ENCODE measurements at regions of chr2 and their contacts with region 1.

Region 1: DNA sequence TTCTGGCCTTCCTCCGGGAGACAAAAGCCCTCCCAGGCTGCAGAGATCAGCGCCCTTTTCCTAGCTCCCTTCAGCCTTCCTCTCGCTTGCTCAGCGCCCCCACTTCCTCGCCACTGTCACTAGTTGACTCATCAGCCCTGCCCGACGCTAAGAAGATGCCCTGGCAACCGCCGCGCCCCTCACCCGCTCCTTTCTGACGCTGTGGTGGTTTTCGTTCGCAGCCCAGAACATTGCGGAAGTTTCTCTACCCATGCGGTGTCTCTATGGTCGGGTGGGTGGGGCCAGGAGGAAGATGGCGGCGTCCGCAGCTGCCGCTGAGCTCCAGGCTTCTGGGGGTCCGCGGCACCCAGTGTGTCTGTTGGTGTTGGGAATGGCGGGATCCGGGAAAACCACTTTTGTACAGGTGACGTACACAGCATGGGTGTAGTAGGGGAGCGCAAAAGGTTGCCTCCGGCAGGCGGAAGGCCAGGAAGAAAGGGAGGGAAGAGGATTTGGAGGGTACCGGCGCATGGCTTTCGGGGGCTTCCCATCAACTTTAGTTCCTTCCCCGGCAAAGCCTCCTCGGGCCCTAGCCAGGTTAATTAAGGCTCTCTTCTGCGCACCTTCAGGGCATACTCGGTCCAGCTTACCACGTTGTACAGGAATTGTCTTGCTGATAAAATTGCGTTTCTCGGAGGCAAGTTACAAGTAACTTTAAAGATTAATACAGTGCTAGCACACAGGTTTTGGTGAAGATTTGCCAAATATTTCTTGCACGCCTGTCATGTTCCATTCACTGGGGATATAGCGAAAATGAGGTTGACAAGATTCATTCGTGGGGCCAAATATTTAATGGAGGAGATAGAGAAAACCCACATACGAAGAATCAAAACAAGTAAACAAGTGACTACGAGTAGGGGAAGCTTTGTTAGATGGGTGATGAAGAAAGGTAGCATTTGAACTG is at the starts of genes CCDC121 and GPN1:
- DNase-seq: peak; percentile 85
- ATAC-seq: peak; percentile 99
- H3K4me3 Mint-ChIP-seq: no peak within 1 kb of the TSS
- H3K27ac Mint-ChIP-seq: peak within 1 kb of the TSS; percentile 69
- H3K4me1 Mint-ChIP-seq: peaks cover 12% of the 10 kb centered on the region
- H3K27me3 Mint-ChIP-seq: no peaks in the 10 kb centered on the region
- CTCF ChIP-seq: no peak
- total RNA-seq, gene CCDC121: 0.69 and 0.71 TPM in 2 replicates
- total RNA-seq, gene GPN1: 36.9 and 39.3 TPM in 2 replicates

Region 2: GRCh38 chr2:27071277-27071989 is 557.6 kb before region 1 on chr2 and contains the start of gene OST4:
- CTCF ChIA-PET with region 1: no interaction called
- POLR2A ChIA-PET with region 1: interaction called, 3 read pairs
- intact Hi-C with region 1: loop called (anchors 2 kb)
- DNase-seq: peak; percentile 92
- ATAC-seq: peak; percentile 96
- H3K4me3 Mint-ChIP-seq: peak within 1 kb of the TSS; percentile 97
- H3K27ac Mint-ChIP-seq: peak within 1 kb of the TSS; percentile 90
- H3K4me1 Mint-ChIP-seq: peaks cover 67% of the 10 kb centered on the region
- H3K27me3 Mint-ChIP-seq: no peaks in the 10 kb centered on the region
- CTCF ChIP-seq: no peak
- total RNA-seq, gene OST4: 243 and 265 TPM in 2 replicates

Region 3: GRCh38 chr2:27356382-27357181 is 272.5 kb before region 1 on chr2 and contains the start of gene GTF3C2:
- CTCF ChIA-PET with region 1: no interaction called
- POLR2A ChIA-PET with region 1: interaction called, 3 read pairs
- intact Hi-C with region 1: loop called (anchors 1 kb)
- DNase-seq: peak; percentile 87
- ATAC-seq: peak; percentile 83
- H3K4me3 Mint-ChIP-seq: peak within 1 kb of the TSS; percentile 98
- H3K27ac Mint-ChIP-seq: peak within 1 kb of the TSS; percentile 100
- H3K4me1 Mint-ChIP-seq: peaks cover 53% of the 10 kb centered on the region
- H3K27me3 Mint-ChIP-seq: no peaks in the 10 kb centered on the region
- CTCF ChIP-seq: no peak
- total RNA-seq, gene GTF3C2: 91.7 and 119 TPM in 2 replicates

Region 4: DNA sequence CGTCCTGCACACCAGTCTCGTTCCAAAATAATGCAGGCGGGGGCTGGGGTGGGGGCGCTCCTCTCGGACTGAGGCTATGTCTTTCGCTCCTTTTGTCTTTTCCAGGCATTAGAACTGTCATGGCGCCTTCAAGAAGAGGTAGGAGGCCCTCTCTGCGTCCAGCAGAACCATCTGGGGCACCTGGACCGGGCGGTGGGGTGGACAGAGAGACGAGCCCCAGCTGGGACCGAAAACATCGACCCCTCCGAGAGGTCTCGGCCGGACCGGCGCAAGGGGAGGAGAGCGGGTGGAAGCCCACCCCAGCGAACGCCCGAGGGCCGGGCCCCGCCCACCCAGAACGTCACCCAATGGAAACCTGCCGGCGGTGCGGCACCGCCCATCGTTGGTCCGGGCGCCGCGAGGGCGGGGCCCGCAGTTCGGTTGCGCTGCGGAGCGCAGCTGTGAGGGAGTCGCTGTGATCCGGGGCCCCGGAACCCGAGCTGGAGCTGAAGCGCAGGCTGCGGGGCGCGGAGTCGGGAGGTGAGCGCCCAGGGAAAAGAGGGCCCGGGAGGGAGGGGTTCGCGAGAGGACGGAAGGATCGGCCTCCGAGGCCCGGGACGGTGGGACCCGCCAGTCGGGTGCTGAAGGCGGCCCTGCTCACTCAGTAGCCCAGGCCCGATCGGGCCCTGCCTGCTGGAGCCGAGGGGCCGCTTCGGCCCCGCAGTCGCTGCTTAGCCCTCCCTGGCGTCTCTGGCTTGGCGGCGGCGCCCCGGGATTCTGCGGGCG is 200.6 kb before region 1 on chr2 and contains the start of gene NRBP1:
- CTCF ChIA-PET with region 1: no interaction called
- POLR2A ChIA-PET with region 1: no interaction called
- intact Hi-C with region 1: loop called (anchors 1 kb)
- DNase-seq: peak; percentile 95
- ATAC-seq: peak; percentile 90
- H3K4me3 Mint-ChIP-seq: peak within 1 kb of the TSS; percentile 98
- H3K27ac Mint-ChIP-seq: peak within 1 kb of the TSS; percentile 98
- H3K4me1 Mint-ChIP-seq: peaks cover 50% of the 10 kb centered on the region
- H3K27me3 Mint-ChIP-seq: no peaks in the 10 kb centered on the region
- CTCF ChIP-seq: no peak
- total RNA-seq, gene NRBP1: 78.9 and 82.3 TPM in 2 replicates

Region 5: DNA sequence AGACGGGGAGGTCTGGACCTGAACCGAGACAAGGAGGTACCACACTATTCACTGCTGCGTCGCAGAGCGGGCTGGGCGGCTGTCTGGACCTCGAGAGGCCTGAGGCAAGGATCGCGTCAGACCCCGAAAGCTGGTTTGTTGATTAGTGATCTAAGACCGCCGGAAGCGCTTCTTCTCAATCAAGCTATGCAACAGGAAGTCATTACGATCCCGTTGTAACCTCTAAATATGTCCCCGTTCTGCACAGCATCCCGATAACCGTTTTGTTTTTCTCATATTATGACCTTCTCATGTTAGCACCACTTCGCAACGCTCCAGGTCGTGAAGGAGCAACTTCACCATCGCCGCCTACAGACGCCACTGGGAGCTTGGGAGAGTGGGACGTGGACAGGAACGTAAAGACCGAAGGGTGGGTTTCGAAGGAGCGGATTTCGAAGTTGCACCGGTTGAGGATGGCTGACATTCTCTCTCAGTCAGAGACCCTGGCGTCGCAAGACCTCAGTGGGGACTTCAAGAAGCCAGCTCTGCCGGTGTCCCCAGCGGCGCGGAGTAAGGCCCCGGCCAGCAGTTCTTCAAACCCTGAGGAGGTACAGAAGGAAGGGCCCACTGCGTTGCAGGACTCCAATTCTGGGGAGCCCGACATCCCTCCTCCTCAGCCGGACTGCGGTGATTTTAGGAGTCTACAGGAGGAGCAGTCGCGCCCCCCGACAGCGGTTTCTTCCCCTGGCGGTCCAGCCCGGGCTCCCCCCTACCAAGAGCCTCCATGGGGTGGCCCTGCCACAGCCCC is 34.6 kb after region 1 on chr2 and contains the starts of genes SLC4A1AP and SUPT7L:
- CTCF ChIA-PET with region 1: no interaction called
- POLR2A ChIA-PET with region 1: interaction called, 20 read pairs
- intact Hi-C with region 1: loop called (anchors 1 kb)
- DNase-seq: peak; percentile 72
- ATAC-seq: peak; percentile 81
- H3K4me3 Mint-ChIP-seq: peak within 1 kb of the TSS; percentile 100
- H3K27ac Mint-ChIP-seq: peak within 1 kb of the TSS; percentile 99
- H3K4me1 Mint-ChIP-seq: peaks cover 46% of the 10 kb centered on the region
- H3K27me3 Mint-ChIP-seq: no peaks in the 10 kb centered on the region
- CTCF ChIP-seq: no peak
- total RNA-seq, gene SLC4A1AP: 21.4 and 22.0 TPM in 2 replicates
- total RNA-seq, gene SUPT7L: 28.1 and 30.9 TPM in 2 replicates

Region 6: GRCh38 chr2:27807476-27807875 is 178.4 kb after region 1 on chr2:
- CTCF ChIA-PET with region 1: no interaction called
- POLR2A ChIA-PET with region 1: no interaction called
- intact Hi-C with region 1: no loop called
- DNase-seq: no peak
- ATAC-seq: no peak
- H3K4me3 Mint-ChIP-seq: no peak overlapping the region
- H3K27ac Mint-ChIP-seq: no peak overlapping the region
- H3K4me1 Mint-ChIP-seq: no peaks in the 10 kb centered on the region
- H3K27me3 Mint-ChIP-seq: no peaks in the 10 kb centered on the region
- CTCF ChIP-seq: no peak

Region 7: GRCh38 chr2:28894470-28895177 is 1265.6 kb after region 1 on chr2 and contains the start of gene WDR43:
- CTCF ChIA-PET with region 1: no interaction called
- POLR2A ChIA-PET with region 1: interaction called, 13 read pairs
- intact Hi-C with region 1: no loop called
- DNase-seq: peak; percentile 99
- ATAC-seq: peak; percentile 99
- H3K4me3 Mint-ChIP-seq: peak within 1 kb of the TSS; percentile 99
- H3K27ac Mint-ChIP-seq: peak within 1 kb of the TSS; percentile 87
- H3K4me1 Mint-ChIP-seq: peaks cover 44% of the 10 kb centered on the region
- H3K27me3 Mint-ChIP-seq: no peaks in the 10 kb centered on the region
- CTCF ChIP-seq: no peak
- total RNA-seq, gene WDR43: 86.6 and 98.8 TPM in 2 replicates

Measured in activated B cell treated with CpG ODN at 0.5 μM for 24 hours (primary cell).